ENCODE measurements at regions of chr19 and their contacts with region 1.

Region 1: DNA sequence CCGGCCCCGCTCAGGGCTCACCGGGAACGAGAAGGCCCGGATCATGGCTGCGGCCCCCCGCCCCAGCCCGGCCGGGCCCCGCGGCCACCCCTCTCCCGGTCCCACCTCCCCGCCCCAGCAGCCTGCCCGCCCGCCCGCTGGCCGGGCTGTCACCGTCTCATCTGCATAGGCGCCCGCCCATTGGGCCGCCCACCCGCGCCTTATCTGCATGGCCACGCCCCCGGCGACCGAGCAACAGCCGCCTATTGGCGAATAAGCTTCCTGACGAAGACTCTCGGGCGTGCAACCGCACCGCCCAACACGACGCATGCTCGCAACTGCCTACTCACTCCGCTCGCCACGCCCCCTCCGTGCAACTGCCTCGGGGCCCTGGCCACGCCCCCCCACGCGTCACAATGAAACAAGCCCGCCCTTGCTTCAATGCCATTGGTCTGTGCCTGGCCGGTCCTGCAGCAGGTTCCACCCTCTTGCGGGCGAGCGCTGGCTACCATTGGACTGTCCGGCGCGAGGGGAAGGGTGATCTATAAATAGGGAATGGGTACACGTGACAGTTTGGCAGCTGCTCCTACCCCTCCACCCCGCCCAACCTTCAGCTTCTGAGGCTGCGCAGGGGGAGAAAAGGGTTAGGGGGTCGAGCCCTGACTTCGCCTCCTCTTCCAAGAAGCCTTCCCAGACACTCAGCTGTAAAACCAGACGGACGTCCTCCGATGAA is at the start of gene DACT3:
- DNase-seq: peak; percentile 100
- H3K4me3 ChIP-seq: peak within 1 kb of the TSS; percentile 70 to 96
- H3K27ac ChIP-seq: peak within 1 kb of the TSS; percentile 87 to 96
- H3K4me1 ChIP-seq: peaks cover 6 to 13% of the 10 kb centered on the region in 2 donors
- H3K27me3 ChIP-seq: no peaks in the 10 kb centered on the region
- CTCF ChIP-seq: no peak
- total RNA-seq, gene DACT3: 104 TPM

Region 2: GRCh38 chr19:46404055-46404752 is 257.0 kb before region 1 on chr19:
- intact Hi-C with region 1: no loop called
- DNase-seq: no peak
- H3K4me3 ChIP-seq: peak overlapping the region; percentile 46 to 62
- H3K27ac ChIP-seq: peak overlapping the region; percentile 72 to 77
- H3K4me1 ChIP-seq: peaks cover 0 to 23% of the 10 kb centered on the region in 2 donors
- H3K27me3 ChIP-seq: no peaks in the 10 kb centered on the region
- CTCF ChIP-seq: no peak

Region 3: GRCh38 chr19:46529622-46530462 is 131.3 kb before region 1 on chr19:
- intact Hi-C with region 1: loop called (anchors 1 kb)
- DNase-seq: peak; percentile 48 to 78
- H3K4me3 ChIP-seq: no peak overlapping the region
- H3K27ac ChIP-seq: no peak overlapping the region
- H3K4me1 ChIP-seq: no peaks in the 10 kb centered on the region
- H3K27me3 ChIP-seq: no peaks in the 10 kb centered on the region
- CTCF ChIP-seq: peak; percentile 87 to 95 (median 94)

Region 4: GRCh38 chr19:46600384-46601317 is 60.5 kb before region 1 on chr19:
- intact Hi-C with region 1: loop called (anchors 1 kb)
- DNase-seq: peak; percentile 85 to 99
- H3K4me3 ChIP-seq: peak overlapping the region; percentile 88
- H3K27ac ChIP-seq: peak overlapping the region; percentile 93 to 98
- H3K4me1 ChIP-seq: peaks cover 9 to 31% of the 10 kb centered on the region in 2 donors
- H3K27me3 ChIP-seq: no peaks in the 10 kb centered on the region
- CTCF ChIP-seq: peak in 1 of 3 experiments; percentile 24

Region 5: GRCh38 chr19:46614114-46614722 is 47.0 kb before region 1 on chr19:
- intact Hi-C with region 1: loop called (anchors 1 kb)
- DNase-seq: peak in 1 of 2 donors; percentile 91
- H3K4me3 ChIP-seq: no peak overlapping the region
- H3K27ac ChIP-seq: peak overlapping the region; percentile 1 to 23
- H3K4me1 ChIP-seq: peaks cover 9 to 21% of the 10 kb centered on the region in 2 donors
- H3K27me3 ChIP-seq: no peaks in the 10 kb centered on the region
- CTCF ChIP-seq: peak; percentile 91 to 95 (median 94)